ENCODE measurements at regions of chr17 and their contacts with region 1.

Region 1: DNA sequence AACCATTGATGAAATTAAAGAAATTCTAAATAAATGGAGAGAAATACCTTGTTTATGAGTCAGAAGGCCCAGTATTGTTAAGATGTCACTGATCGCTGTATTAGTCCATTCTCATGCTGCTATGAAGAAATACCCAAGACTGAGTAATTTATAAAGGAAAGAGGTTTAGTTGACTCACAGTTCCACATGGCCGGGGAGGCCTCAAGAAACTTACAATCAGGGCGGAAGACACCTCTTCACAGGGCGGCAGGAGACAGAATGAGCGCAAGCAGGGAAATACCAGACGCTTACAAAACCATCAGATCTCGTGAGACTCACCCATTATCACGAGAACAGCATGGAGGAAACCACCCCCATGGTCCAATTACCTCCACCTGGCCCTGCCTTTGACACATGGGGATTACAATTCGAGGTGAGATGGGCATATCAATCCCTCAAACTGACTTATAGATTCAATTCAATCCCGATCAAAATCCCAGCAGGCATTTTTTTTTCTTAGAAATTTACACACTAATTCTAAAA is 157.2 kb downstream of the ENGASE start:
- DNase-seq: peak; percentile 37
- H3K4me3 Mint-ChIP-seq: no peak overlapping the region
- H3K27ac Mint-ChIP-seq: peak overlapping the region; percentile 68
- H3K4me1 Mint-ChIP-seq: peaks cover 17% of the 10 kb centered on the region
- H3K27me3 Mint-ChIP-seq: no peaks in the 10 kb centered on the region
- CTCF ChIP-seq: no peak

Region 2: DNA sequence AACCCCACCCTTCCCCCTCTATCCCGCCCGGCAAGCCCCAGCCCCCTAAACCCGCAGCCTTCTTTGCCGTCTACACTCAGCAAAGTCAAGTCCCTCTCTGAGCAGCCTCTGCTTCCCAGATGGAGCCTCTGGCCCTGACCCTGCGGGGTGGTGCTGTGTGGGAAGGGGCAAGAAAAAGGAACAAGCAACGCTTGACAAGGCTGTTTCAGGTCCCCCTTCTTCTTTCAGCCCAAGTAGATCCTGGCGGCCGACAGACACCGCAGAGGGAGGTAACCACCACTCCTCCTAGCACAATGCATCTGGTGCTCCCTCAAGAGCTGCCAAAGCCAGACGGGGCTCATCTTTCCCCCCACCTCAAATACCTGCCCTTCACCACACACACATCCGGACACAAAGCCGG is 21.1 kb after region 1 on chr17:
- CTCF ChIA-PET with region 1: interaction called, 3 read pairs
- POLR2A ChIA-PET with region 1: interaction called, 14 read pairs
- intact Hi-C with region 1: no loop called
- DNase-seq: no peak
- H3K4me3 Mint-ChIP-seq: no peak overlapping the region
- H3K27ac Mint-ChIP-seq: no peak overlapping the region
- H3K4me1 Mint-ChIP-seq: peaks cover 17% of the 10 kb centered on the region
- H3K27me3 Mint-ChIP-seq: peaks cover 82% of the 10 kb centered on the region
- CTCF ChIP-seq: no peak

Region 3: GRCh38 chr17:79276821-79277220 is 45.0 kb after region 1 on chr17:
- CTCF ChIA-PET with region 1: no interaction called
- POLR2A ChIA-PET with region 1: no interaction called
- intact Hi-C with region 1: no loop called
- DNase-seq: no peak
- H3K4me3 Mint-ChIP-seq: no peak overlapping the region
- H3K27ac Mint-ChIP-seq: no peak overlapping the region
- H3K4me1 Mint-ChIP-seq: peaks cover 7% of the 10 kb centered on the region
- H3K27me3 Mint-ChIP-seq: peaks cover 29% of the 10 kb centered on the region
- CTCF ChIP-seq: no peak

Region 4: DNA sequence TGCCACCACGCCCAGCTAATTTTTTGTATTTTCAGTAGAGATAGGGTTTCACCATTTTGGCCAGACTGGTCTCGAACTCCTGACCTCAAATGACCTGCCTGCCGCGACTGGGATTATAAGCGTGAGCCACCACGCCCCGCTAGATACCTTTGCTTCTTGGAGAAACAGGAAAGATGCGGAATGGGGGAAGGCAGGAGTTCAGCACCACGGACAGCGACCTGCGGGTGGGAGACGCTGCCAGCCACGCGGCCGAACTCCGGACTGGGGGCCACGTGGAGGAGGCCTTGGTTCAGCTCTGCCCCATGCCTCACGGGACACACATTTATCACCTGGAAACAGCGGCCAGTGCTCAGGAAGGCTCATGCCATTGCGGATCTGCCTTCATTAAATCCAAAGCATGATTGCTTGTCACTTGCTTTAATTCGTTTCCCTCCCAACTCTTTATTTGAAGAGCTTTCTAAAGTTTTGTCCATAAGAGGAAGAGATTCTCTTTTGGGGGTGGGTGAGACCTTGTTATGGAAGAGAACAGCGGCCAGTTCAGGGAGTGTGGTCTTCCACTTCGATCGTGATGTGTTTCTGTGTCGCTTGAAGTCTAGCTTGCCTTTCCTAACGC is 62.7 kb after region 1 on chr17:
- CTCF ChIA-PET with region 1: no interaction called
- POLR2A ChIA-PET with region 1: no interaction called
- intact Hi-C with region 1: loop called (anchors 1 kb)
- DNase-seq: peak; percentile 57
- H3K4me3 Mint-ChIP-seq: no peak overlapping the region
- H3K27ac Mint-ChIP-seq: no peak overlapping the region
- H3K4me1 Mint-ChIP-seq: no peaks in the 10 kb centered on the region
- H3K27me3 Mint-ChIP-seq: peaks cover 100% of the 10 kb centered on the region
- CTCF ChIP-seq: no peak

Region 5: GRCh38 chr17:79338604-79339003 is 106.8 kb after region 1 on chr17:
- CTCF ChIA-PET with region 1: no interaction called
- POLR2A ChIA-PET with region 1: interaction called, 10 read pairs
- intact Hi-C with region 1: no loop called
- DNase-seq: peak; percentile 17
- H3K4me3 Mint-ChIP-seq: no peak overlapping the region
- H3K27ac Mint-ChIP-seq: no peak overlapping the region
- H3K4me1 Mint-ChIP-seq: peaks cover 8% of the 10 kb centered on the region
- H3K27me3 Mint-ChIP-seq: peaks cover 66% of the 10 kb centered on the region
- CTCF ChIP-seq: no peak